Right ventricle myocardium superior (tissue), 1 donor: ENCODE measurements at regions of chr14 and their contacts with region 1.

Region 1: DNA sequence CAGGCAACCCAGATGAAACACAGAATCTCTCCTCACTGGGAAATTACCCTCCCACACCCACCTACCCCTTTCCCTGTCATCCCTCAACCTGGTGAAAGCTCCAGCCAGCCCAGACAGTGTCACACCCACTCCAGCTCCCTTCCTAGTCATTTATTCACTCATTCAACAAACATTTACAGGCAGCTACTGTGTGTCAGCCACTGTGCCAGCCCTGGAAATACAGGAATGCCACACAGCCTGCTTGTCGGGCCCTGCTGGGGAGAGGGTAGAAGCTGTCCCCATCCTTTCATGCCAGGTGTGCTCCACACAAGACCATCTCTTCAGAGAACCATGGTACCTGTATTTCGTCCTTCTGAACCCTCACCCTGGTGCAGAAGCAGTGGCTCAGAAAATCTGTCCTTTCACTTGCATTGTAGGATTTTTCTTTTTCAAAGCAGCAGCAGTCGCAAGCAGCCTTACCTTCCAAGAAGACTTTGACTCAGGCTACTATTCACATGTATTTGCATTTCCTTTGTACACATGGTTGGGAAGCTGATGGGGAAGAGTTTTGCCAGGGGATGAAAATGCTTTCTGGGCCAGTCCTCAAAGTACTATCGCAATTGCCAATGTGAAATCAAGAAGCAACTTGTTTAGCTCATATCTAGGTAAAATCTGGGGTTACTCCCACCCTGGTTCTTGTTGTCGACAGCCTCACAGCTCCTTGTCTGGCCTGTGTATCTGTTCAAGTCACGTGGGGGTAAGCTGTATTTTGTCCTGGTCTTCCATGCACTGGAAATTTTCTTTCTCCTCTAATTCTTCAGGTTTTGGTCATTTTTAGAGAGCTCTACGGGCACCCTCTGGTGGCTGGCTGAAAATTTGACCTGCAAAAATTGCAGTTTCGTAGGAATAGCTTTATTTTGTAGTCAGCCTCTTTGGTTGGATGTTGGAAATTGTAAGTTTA is 147.4 kb upstream of the EGLN3 start:
- DNase-seq: no peak
- ATAC-seq: peak; percentile 77

Region 2: DNA sequence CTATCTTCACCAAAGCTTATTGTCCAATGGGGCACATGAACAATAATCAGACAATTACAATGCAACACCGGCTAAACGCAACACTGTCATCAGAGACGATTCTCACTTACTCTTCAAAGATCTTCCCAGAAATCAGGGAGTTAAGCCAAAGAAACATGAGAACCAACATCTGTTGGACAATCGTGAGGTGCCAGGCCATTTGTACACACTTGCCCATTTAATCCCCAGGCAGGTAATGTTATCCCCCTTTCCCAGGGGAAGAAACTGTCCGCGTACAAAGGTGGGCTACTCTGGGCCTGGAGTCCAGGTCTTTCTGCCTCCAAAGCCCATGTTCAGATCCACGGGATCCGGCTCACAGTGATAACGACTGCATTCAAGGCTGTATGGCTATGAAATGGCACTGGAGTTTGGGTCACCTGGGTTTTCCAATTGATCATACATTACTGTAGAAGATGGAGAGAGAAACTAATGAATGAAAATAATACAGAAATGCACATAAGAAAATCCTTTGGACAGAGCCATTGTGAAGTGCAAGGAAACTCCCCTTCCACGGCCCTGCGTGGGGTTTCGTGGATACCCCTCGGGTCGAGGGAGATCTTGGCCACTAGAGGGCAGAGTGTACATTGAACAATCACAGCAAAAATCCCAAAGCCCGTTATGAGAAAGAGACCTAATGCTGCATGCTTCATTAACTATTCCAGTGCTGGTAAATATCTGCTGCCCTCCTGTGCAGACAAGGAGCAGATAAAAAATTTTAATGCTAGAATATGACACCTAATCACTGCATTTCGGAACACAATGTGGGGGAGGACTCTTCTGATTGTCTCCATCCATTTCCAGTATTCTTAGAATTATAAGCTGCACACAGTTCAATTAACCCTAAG is 258.9 kb before region 1 on chr14:
- intact Hi-C with region 1: loop called (anchors 5 kb)
- DNase-seq: peak; percentile 46
- ATAC-seq: peak; percentile 91

Region 3: DNA sequence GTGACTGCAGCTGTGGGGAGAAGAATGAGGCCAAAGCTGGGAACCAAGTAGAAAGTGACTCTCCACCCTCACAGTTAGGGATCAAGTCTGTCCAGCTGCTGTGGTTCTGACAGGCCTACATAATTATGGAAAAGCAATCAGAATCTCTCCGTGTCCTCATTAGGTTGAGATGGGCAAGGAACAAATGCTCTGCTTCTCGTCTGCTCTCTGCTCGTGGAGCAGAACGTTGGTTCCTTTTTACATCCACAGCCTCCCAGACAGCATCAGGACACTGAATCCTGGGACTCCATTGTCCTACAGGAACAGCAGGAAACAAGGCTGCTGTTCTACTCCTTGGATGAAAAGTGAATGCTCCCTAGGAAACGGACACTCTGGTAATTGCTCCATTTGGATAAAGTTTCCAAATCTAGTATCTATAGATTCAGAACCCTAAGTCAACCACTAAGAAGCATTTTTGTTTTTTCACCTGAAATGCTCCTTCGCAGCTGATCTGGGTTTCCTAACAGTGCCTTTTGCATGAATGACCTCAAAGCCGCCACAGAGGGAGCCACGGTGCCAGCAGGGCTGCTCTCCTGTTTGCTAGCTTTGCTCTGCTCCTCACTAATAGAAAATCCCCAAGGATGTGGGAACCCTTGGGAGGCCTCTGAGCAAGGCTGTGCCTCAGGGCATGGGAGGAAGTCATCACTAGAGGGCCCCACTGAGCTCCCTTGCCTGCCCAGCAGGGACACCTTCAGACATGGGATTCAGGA is 249.4 kb before region 1 on chr14:
- intact Hi-C with region 1: loop called (anchors 5 kb)
- DNase-seq: peak; percentile 67
- ATAC-seq: peak; percentile 92

Region 4: DNA sequence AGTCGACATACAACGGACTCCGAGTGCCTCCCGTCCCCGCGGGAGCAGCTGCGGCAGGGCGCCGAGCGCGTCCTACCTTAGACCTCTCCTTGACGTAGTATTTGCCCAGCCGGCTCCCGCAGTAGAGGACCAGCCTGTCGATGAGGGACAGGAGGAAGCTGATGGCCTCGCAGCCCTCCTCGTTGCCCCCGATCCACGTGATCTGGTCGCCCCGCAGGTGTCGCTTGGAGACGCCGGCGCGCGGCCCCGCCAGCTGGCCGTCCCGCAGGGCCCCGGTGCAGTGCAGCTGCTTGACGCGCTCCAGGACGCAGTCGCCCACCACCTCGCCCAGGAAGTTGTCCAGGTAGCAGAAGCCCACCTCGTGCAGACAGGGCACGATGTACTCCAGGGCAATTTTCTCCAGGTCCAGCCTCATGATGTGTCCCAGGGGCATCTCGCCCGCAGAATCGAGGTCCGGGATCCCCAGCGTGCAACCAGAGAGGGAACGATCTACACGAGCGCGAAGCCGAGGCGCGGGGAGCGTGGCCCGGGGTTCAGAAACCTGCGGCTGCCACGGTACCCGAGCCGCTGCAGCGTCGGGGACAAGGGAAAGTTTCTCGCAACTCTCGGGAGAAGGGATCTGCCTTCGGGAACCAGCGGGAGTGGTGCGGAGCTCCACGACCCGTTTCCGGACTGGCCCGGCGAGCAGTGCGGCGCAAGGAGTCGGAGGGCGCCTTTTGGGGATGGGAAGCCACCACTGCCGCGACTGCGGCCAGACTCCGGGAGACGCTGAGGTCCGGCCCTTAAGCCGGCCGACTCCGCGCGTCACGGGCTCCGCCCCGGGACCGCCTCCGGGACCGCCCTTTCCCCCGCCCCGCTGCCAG is 147.8 kb before region 1 on chr14 and contains the start of gene EGLN3:
- intact Hi-C with region 1: loop called (anchors 10 kb)
- DNase-seq: peak; percentile 94
- ATAC-seq: peak; percentile 98
- total RNA-seq, gene EGLN3: 111 TPM

Region 5: DNA sequence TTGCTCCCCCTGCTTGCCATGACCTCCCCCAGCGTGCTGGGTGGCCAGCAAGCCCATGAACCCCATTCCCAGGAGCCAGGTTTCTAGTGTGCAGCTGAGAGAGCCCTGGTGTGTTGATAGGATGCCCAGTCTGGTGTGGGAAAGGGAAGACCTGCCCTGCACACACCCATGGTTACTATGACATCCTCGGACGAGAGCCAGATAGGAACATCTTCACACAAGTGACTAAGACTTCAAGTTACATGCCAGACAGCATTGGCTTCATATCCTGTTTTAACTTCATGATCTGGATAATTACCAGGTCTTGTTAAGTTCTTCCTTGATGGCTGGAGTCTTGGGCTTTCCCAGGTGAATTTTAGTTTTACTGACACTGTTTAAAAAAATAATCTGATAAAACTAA is 49.1 kb after region 1 on chr14:
- intact Hi-C with region 1: no loop called
- DNase-seq: no peak
- ATAC-seq: no peak